HEK293 (cell line): ENCODE measurements at regions of chr2 and their contacts with region 1.

Region 1: DNA sequence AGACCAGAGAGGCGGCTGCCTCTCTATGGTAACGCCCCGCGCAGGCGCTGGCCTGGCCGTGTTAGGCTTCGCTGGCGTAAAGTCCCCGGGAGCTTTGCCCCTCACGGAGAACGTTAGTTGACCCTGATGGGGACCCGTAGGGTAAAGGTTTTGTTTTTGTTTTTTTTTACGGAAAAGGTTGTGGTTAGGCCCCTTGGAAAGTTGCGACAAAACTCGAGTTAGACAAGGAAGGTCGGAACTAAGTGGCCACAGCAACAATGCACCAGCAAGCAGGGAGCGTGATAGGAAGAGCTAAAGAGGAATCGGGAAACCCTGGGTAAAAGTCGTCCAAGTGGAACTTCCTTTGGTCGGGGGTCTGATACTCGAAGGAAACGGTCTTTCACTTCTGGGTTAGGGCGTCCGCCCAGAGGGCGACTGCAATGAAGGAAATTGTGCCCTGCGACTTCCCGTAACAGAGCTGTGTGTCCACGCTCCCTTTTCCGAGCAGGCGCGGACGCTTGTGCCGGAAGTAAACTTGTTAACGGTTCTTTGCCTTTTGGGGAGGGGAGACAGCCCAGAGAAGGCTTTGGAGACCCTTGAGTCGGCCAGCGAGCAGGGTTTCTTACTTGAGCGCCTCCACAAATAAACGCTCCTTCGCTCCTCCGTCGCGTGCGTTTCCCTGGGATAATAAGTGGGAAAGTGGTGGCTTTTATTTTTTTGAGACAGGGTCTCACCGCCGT is 493 bp upstream of the CLASP1 start:
- H3K4me3 ChIP-seq: peak overlapping the region; percentile 94
- H3K27ac ChIP-seq: peak overlapping the region; percentile 81
- H3K4me1 ChIP-seq: peaks cover 6% of the 10 kb centered on the region; the same call in 1 of the 2 replicates
- CTCF ChIP-seq: no peak

Region 2: DNA sequence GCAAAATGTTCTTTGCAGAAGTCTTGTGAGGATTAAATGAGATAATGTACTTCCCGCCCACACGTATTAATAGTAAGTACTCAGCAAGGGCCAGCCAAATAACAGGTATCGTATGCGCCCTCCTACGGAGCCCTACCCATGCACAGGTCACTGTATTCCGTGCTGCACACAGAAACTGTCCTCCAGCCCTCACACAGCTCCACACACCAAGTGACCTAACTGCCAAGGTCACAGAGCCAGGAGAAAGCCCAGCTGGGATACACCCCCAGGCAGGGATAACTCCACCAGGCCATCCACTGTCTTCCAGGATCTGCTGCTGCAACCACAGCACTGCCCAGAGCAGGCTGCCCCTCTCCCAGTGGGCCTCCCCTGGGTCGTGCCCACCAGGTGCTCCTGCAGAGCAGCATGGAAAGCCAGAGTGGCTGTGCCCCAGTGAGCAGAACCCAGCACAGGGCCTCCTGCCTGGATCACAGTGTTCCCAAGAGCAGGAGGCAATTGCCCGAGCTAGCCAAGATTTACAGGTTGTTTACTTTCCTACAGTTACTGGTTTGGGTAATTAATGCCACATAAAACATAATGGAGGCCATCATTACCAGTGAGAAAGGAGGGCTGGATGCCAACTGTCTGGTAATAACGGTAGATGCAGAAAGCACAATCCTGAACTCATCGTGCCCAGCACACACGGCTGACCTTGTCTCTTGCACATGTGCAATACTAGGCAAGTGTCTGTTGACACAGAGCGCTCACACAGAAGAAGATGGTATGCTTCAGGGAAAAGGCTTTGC is 389.2 kb before region 1 on chr2:
- CTCF ChIA-PET with region 1: no interaction called
- POLR2A ChIA-PET with region 1: no interaction called
- H3K4me3 ChIP-seq: no peak overlapping the region
- H3K27ac ChIP-seq: no peak overlapping the region
- H3K4me1 ChIP-seq: peaks cover 15% of the 10 kb centered on the region
- CTCF ChIP-seq: no peak

Region 3: GRCh38 chr2:121530212-121530705 is 119.5 kb before region 1 on chr2:
- CTCF ChIA-PET with region 1: interaction called, 6 read pairs
- POLR2A ChIA-PET with region 1: interaction called, 39 read pairs
- H3K4me3 ChIP-seq: peak overlapping the region; percentile 78
- H3K27ac ChIP-seq: peak overlapping the region; percentile 100
- H3K4me1 ChIP-seq: peaks cover 17% of the 10 kb centered on the region
- CTCF ChIP-seq: no peak

Region 4: DNA sequence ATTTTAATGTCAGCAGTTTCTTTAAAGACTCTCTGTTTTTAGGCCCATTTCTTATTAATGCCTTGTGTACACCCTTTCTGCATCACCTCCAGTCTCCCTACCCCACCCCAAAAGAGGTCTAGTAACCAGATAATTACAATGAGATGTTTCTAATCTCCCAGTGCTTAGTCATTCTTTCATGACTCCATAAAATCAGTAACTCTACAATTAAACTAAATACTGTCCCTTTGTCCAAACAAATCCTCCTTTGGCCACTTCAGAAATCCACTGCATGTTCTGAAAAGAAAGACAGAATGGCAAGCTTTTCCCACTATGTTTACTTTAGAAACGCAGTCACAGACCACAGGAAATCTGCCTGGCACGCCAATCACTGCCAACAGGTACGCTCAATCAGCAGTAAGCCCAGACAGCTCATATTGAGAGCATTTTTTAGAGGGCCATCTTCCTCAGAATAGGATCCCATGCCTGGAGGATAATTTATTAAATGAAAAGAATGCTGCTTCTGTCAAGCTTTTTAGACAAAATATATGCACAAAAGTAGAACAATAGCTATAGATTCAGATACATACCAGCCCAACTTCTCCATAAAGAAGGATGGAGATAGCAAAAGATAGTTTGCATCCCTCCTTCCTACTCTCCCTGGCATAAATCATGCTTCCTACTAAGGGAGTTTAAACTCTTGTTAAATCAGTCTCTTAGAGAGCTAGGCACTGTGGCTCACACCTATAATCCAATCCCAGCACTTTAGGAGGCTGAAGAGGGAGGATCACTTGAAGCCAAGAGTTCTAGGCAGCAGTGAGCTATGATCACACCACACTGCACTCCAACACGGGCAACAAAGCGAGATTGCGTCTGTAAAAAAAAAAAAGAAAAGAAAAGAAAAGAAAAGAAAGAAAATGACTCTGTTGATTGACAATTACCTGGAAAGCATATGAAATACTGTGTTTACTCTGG is 15.1 kb before region 1 on chr2:
- CTCF ChIA-PET with region 1: no interaction called
- POLR2A ChIA-PET with region 1: interaction called, 17 read pairs
- H3K4me3 ChIP-seq: no peak overlapping the region
- H3K27ac ChIP-seq: peak overlapping the region; percentile 46
- H3K4me1 ChIP-seq: peaks cover 18% of the 10 kb centered on the region; the same call in 1 of the 2 replicates
- CTCF ChIP-seq: no peak

Region 5: DNA sequence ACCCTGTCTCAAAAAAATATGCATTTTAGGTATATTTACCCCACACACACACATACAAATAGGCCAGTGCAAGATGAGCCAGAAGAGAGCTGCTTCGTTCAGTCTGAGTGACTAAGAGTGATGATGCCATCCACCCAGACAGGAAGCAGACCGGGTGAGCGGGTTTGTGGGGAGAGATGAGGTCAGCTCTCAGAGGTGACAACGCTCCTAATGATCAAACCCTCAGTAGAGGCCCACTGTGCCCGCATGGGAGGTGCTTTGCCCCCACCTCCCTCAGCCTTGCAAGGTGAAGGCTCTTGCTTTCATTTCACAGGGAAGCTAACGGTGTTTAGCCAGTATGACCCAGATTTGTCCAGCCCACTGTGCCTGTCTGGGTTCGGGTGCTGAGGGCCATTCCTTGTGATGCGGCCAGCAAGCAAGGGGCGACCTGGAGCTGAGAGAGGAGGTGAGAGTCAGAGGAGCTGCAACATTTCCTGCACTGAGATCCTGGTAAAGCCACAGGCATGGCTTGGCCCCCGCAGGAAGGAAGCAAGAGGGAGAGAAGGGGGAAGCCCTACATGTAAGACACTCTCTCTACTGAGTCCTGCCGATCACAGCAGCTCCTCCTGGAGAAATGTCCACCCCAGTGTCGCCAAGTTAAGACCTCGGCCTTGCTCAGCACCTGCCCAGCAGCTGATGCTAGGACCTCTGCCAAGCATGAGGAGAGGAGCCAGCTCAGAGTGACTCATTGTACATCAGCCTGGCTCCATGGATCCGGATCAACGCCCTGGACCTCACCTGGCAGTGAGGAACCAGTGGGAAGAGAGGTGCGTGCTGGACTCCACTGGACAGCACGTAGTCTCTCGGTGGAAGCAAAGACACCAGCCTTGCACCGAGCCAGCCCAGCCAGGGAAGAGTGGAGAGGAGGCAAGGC is 49.9 kb after region 1 on chr2:
- CTCF ChIA-PET with region 1: no interaction called
- POLR2A ChIA-PET with region 1: interaction called, 10 read pairs
- H3K4me3 ChIP-seq: no peak overlapping the region
- H3K27ac ChIP-seq: no peak overlapping the region
- H3K4me1 ChIP-seq: peaks cover 4% of the 10 kb centered on the region; the same call in 1 of the 2 replicates
- CTCF ChIP-seq: no peak

Region 6: GRCh38 chr2:121736462-121737341 is 86.9 kb after region 1 on chr2 and contains the start of gene NIFK:
- CTCF ChIA-PET with region 1: interaction called, 3 read pairs
- POLR2A ChIA-PET with region 1: interaction called, 18 read pairs
- H3K4me3 ChIP-seq: peak within 1 kb of the TSS; percentile 96
- H3K27ac ChIP-seq: peak within 1 kb of the TSS; percentile 84
- H3K4me1 ChIP-seq: no peaks in the 10 kb centered on the region
- CTCF ChIP-seq: no peak

Region 7: DNA sequence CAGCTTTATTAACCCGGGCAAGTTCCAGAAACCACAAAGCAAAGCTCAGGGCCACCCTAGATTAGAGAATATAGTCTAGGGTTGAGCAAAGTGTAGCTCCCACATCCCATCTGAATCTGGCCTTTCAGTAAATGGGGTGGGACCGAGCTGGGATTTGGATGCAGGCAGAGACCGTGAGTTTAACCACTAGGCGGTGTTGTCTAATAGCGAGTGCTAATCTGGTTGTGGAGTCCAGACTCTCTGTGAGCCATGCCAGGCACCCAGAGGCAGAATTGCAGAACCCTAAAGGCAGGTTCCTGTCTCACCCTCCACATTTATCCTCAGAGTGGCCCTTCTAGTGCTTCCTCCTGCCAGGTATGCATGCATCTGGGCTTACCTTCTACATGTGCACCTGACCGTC is 541.6 kb after region 1 on chr2:
- CTCF ChIA-PET with region 1: no interaction called
- POLR2A ChIA-PET with region 1: no interaction called
- H3K4me3 ChIP-seq: no peak overlapping the region
- H3K27ac ChIP-seq: no peak overlapping the region
- H3K4me1 ChIP-seq: no peaks in the 10 kb centered on the region
- CTCF ChIP-seq: no peak